Ascending aorta (tissue), 2 donors: ENCODE measurements at regions of chr3 and their contacts with region 1.

Region 1: DNA sequence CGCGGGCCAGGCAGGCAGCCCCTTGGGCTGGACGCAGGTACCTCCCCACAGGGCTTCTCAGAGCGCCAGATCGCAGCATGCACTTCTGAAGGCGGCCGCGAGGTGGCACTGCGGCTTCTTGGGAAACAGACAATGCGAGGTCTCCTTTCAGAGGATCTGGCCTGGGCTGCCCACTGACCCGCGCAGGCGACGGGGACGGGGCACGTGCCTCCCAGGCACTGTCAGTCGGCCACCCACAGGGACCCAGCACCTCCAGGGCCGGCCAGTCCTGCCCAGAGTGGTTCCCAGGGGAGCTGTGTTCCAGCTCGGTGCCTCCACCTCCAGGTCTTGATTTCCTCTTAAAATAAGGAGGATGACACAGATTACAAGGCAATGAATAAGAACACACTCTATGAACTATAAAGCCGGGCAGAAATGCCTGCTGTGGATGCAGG is 24.4 kb upstream of the TXNRD3 start:
- DNase-seq: peak in 1 of 2 donors; percentile 93
- H3K4me3 ChIP-seq: peak overlapping the region in 1 of 2 donors; percentile 37
- H3K27ac ChIP-seq: peak overlapping the region in 1 of 2 donors; percentile 45
- H3K4me1 ChIP-seq: peaks cover 5 to 22% of the 10 kb centered on the region in 2 donors
- H3K27me3 ChIP-seq: no peaks in the 10 kb centered on the region
- CTCF ChIP-seq: peak; percentile 94 to 100 (median 99)

Region 2: DNA sequence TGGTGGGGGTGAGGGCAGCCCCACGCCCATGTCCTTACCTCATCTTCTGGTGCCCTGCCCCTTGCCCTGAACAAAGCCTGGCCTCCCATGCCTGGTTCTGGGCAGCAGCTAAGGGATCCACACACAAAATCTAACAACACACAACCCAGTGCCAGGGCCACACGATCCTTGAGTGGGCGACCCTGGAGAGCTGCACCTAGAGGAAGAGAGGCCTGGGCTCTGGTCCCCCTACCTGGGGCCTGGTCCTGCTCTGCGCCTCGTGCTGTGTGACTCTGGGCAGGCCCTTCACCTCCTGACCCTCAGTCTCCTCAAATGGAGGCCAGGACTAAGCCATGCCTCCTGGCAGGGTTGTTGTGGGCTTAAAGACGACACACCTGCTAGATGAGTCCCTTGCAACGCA is 100.6 kb before region 1 on chr3:
- intact Hi-C with region 1: no loop called
- DNase-seq: no peak
- H3K4me3 ChIP-seq: no peak overlapping the region
- H3K27ac ChIP-seq: no peak overlapping the region
- H3K4me1 ChIP-seq: no peaks in the 10 kb centered on the region
- H3K27me3 ChIP-seq: no peaks in the 10 kb centered on the region
- CTCF ChIP-seq: no peak

Region 3: GRCh38 chr3:126703512-126704462 is 24.5 kb after region 1 on chr3 and contains the start of gene CHCHD6:
- intact Hi-C with region 1: loop called (anchors 1 kb)
- DNase-seq: peak; percentile 79 to 97
- H3K4me3 ChIP-seq: peak within 1 kb of the TSS; percentile 59 to 89
- H3K27ac ChIP-seq: no peak within 1 kb of the TSS
- H3K4me1 ChIP-seq: peaks cover 0 to 3% of the 10 kb centered on the region in 2 donors
- H3K27me3 ChIP-seq: no peaks in the 10 kb centered on the region
- CTCF ChIP-seq: peak in 1 of 3 experiments; percentile 9
- total RNA-seq, gene CHCHD6: 1.2 TPM

Region 4: DNA sequence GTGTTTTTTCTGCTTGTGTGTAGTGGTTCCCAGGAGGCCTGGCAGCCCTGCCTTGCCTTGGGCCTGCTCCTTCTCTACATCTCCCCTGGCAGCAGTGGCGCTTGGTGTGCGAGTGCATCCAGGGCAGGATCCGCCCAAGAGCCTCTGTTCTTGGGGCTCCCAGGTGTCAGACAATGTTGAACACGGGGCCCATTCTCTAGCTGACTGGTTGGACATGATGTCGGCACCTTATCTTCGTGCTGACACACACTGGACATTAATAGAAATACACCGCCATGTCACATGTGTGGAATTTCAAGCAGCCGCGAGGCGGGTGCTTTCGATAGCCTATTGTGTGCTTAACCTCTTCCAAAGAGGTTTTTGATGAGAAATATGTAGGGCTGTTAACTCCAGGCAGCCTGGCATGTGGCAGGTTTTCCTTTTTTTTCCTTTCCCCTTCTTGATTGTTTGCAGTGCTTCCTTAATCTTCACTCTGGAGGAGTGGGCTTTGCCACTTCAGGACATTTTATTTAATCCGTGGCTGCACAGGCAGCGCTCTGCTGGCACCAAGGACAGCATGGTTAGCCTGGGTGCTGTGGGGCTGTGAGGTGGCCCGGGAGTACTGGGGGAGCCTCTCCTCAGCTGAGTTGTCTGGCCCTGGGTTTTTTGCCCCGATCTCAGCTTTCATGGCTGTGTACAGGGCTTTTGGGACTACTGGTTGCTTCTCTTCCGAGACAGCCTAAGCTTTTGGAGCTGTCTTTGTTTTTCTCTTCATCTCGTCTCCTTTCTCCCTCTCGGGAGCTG is 67.3 kb after region 1 on chr3:
- intact Hi-C with region 1: loop called (anchors 1 kb)
- DNase-seq: no peak
- H3K4me3 ChIP-seq: peak overlapping the region in 1 of 2 donors; percentile 37
- H3K27ac ChIP-seq: peak overlapping the region; percentile 74 to 91
- H3K4me1 ChIP-seq: peaks cover 8 to 22% of the 10 kb centered on the region in 2 donors
- H3K27me3 ChIP-seq: no peaks in the 10 kb centered on the region
- CTCF ChIP-seq: peak in 2 of 3 experiments; percentile 23 to 38

Region 5: DNA sequence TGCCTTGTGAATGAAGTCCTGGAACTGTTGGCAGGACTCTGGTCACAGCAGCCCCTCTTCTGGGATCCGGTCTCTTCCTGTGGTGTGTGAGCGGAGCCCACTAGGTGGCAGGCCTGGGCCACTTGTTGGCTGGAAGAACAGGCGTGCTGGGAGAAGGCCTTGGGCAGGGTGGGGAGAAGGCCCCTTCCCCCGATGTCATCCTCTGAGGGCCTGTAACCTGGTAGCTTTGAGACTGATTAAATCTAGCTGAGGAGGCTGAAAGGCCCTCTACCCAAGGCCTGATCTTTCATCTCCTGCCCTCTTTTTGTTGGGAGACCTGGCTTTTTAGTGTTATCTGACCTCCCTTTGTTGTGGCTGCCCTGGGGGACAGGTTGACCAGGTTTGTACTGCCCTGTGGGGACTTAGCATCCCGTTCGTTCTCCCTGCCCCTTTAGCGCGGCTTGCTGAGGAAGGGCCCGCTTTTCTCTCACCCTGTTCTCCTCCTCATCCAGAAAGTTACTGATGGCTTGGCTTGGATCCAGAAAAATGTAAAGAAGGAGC is 73.0 kb after region 1 on chr3:
- intact Hi-C with region 1: loop called (anchors 2 kb)
- DNase-seq: peak; percentile 26 to 86
- H3K4me3 ChIP-seq: no peak overlapping the region
- H3K27ac ChIP-seq: no peak overlapping the region
- H3K4me1 ChIP-seq: peaks cover 0 to 16% of the 10 kb centered on the region in 2 donors
- H3K27me3 ChIP-seq: no peaks in the 10 kb centered on the region
- CTCF ChIP-seq: peak; percentile 79 to 87 (median 86)

Region 6: DNA sequence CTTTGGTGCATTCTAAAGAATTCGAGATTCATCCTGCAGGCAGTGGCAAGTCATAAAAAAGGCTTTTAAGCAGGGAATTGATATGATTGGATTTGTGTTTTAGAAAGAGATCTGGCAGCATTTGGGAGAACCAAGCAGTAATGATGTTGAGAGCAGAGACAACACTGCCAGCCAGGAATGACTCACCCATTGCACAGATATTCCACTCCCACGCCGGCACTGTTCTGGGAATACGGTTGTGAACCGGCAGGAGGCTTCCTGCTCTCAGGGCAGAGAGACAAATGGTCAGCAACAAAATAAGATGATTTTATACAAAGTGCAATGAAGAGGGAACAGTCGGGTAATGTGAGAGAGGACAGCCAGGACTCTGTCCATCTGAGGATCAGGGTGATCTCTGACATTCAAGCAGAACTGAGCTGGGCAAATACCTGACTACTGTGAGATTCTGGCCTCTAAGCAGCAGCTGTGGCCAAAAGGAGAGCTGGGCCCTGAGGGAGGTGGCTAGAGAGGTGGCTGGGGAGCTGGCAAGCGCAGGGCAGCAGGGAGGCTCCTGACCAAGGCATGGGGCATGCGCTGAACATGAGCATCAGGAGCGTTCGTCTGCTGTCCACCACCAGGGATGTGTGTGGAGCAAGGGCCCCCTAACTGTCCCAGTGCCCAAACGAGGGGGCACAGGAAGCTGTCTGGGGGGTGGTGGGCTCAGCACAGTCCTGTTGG is 247.5 kb after region 1 on chr3:
- intact Hi-C with region 1: no loop called
- DNase-seq: peak; percentile 34 to 90
- H3K4me3 ChIP-seq: peak overlapping the region in 1 of 2 donors; percentile 9
- H3K27ac ChIP-seq: peak overlapping the region; percentile 74 to 84
- H3K4me1 ChIP-seq: peaks cover 9 to 18% of the 10 kb centered on the region in 2 donors
- H3K27me3 ChIP-seq: no peaks in the 10 kb centered on the region
- CTCF ChIP-seq: peak; percentile 10 to 30 (median 18)

Region 7: GRCh38 chr3:127052121-127052561 is 372.8 kb after region 1 on chr3:
- intact Hi-C with region 1: no loop called
- DNase-seq: peak in 1 of 2 donors; percentile 81
- H3K4me3 ChIP-seq: no peak overlapping the region
- H3K27ac ChIP-seq: peak overlapping the region; percentile 42 to 54
- H3K4me1 ChIP-seq: peaks cover 0 to 11% of the 10 kb centered on the region in 2 donors
- H3K27me3 ChIP-seq: no peaks in the 10 kb centered on the region
- CTCF ChIP-seq: peak in 1 of 3 experiments; percentile 15

Region 8: DNA sequence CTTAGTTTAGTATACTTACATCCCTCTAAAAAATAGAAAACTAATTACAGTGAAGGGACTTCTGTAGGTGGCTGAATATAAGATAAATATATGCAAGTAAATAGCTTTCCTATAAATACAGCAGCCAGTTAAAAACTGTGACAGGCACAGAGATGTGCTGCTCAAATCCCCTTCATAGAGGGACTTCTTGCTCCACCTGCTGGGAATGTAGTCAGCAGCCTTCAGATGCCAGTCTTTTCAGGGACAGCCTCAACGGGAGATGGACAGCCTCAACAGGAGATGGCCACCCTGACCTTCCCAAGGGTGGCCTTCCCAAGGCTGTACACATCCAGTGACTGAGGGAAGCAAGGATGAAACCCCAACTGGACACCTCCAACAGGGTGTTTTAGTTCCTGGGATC is 497.9 kb after region 1 on chr3:
- intact Hi-C with region 1: loop called (anchors 2 kb)
- DNase-seq: no peak
- H3K4me3 ChIP-seq: no peak overlapping the region
- H3K27ac ChIP-seq: no peak overlapping the region
- H3K4me1 ChIP-seq: no peaks in the 10 kb centered on the region
- H3K27me3 ChIP-seq: no peaks in the 10 kb centered on the region
- CTCF ChIP-seq: peak in 2 of 3 experiments; percentile 23 to 54

Region 9: GRCh38 chr3:127455541-127456450 is 776.5 kb after region 1 on chr3:
- intact Hi-C with region 1: loop called (anchors 1 kb)
- DNase-seq: peak in 1 of 2 donors; percentile 79
- H3K4me3 ChIP-seq: peak overlapping the region; percentile 49 to 62
- H3K27ac ChIP-seq: no peak overlapping the region
- H3K4me1 ChIP-seq: peaks cover 0 to 18% of the 10 kb centered on the region in 2 donors
- H3K27me3 ChIP-seq: no peaks in the 10 kb centered on the region
- CTCF ChIP-seq: peak; percentile 84 to 95 (median 92)

Region 10: GRCh38 chr3:127544192-127544802 is 865.0 kb after region 1 on chr3:
- intact Hi-C with region 1: loop called (anchors 2 kb)
- DNase-seq: peak in 1 of 2 donors; percentile 85
- H3K4me3 ChIP-seq: no peak overlapping the region
- H3K27ac ChIP-seq: no peak overlapping the region
- H3K4me1 ChIP-seq: peaks cover 0 to 19% of the 10 kb centered on the region in 2 donors
- H3K27me3 ChIP-seq: no peaks in the 10 kb centered on the region
- CTCF ChIP-seq: peak; percentile 55 to 85 (median 67)